ENCODE measurements at regions of chr3 and their contacts with region 1.

Region 1: DNA sequence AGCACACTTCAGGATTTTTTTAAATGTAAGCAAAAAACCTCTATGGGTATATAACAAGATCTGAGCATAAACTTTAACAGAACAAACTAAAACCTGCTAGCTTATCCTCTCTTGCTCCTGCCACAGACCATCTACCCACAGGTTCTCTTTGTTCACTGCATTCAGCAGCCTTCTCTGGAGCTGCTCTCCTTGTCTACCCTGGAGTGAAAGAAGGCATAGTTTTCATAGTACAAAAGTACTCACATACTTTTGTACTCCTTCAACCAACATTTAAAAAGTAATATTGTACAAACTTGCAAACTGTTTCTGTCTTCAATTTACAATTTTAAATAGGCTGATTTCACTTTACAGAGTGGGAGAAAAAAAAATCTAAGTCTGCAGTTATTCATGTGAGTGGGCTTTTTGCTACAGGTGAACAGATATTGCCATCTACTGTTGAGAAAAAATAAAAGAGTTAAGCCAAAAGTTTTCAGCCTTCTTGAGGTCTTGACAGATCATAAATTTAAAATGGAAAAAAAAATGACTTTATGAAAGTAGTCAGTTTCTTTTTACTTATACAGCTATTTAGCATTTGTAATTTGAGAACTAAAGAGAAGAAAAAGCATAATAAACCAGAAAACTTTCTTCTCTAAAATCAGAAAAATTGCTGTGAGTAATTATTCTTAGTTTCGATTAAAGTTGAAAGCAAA is 20.4 kb downstream of the TERC start:
- DNase-seq: no peak
- H3K4me3 ChIP-seq: no peak overlapping the region
- H3K27ac ChIP-seq: no peak overlapping the region
- H3K4me1 ChIP-seq: no peaks in the 10 kb centered on the region
- H3K27me3 ChIP-seq: no peaks in the 10 kb centered on the region
- CTCF ChIP-seq: peak in 2 of 3 donors; percentile 12 to 28
- EP300 ChIP-seq: no peak
- POLR2A ChIP-seq: no peak

Region 2: DNA sequence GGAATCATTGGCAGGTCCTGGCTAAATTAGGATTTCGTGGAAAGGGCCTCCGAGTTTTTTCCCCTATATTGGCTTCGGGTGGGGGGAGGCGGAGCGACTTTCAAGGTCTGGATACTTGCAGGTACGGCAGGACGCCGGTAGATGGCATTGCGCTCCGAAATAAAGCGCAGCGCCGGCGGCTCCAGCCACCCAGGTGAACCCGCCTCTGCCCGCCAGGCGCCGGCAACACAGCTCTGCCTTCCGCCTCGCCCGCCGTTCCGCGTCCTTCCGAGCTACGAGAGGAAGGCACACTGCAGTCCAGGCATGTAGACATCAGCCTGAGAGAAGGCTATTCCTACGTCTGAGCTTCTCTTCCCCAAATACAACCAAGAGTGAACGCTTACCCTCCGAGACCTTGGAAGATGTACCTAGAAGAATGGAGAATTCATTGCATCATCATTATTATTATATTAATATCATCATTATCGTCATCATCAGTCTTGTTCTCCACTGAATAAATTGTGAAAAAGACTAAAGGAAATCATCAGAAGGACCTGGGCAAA is 595.1 kb before region 1 on chr3:
- intact Hi-C with region 1: loop called in 2 of 4 experiments (anchors 5 to 10 kb)
- DNase-seq: peak; percentile 42 to 81 (median 55)
- H3K4me3 ChIP-seq: peak overlapping the region; percentile 9
- H3K27ac ChIP-seq: no peak overlapping the region
- H3K4me1 ChIP-seq: peaks cover 3% of the 10 kb centered on the region
- H3K27me3 ChIP-seq: no peaks in the 10 kb centered on the region
- CTCF ChIP-seq: peak; percentile 32 to 49 (median 40)
- EP300 ChIP-seq: no peak
- POLR2A ChIP-seq: no peak